ENCODE measurements at regions of chr19 and their contacts with region 1.

Region 1: GRCh38 chr19:3330047-3330446 is 36.3 kb upstream of the NFIC start:
- DNase-seq: no peak
- ATAC-seq: no peak
- H3K4me3 Mint-ChIP-seq: no peak overlapping the region
- H3K27ac Mint-ChIP-seq: no peak overlapping the region
- H3K4me1 Mint-ChIP-seq: no peaks in the 10 kb centered on the region
- H3K27me3 Mint-ChIP-seq: no peaks in the 10 kb centered on the region

Region 2: GRCh38 chr19:3275583-3276340 is 54.3 kb before region 1 on chr19:
- CTCF ChIA-PET with region 1: no interaction called
- POLR2A ChIA-PET with region 1: no interaction called
- DNase-seq: peak; percentile 94
- ATAC-seq: peak; percentile 88
- H3K4me3 Mint-ChIP-seq: peak overlapping the region; percentile 77
- H3K27ac Mint-ChIP-seq: peak overlapping the region; percentile 91
- H3K4me1 Mint-ChIP-seq: peaks cover 18% of the 10 kb centered on the region
- H3K27me3 Mint-ChIP-seq: peaks cover 14% of the 10 kb centered on the region

Region 3: GRCh38 chr19:3471954-3472655 is 142.1 kb after region 1 on chr19:
- CTCF ChIA-PET with region 1: interaction called, 17 read pairs
- POLR2A ChIA-PET with region 1: no interaction called
- DNase-seq: peak; percentile 42
- ATAC-seq: peak; percentile 41
- H3K4me3 Mint-ChIP-seq: no peak overlapping the region
- H3K27ac Mint-ChIP-seq: no peak overlapping the region
- H3K4me1 Mint-ChIP-seq: no peaks in the 10 kb centered on the region
- H3K27me3 Mint-ChIP-seq: no peaks in the 10 kb centered on the region

Measured in activated CD8-positive, alpha-beta T cell treated with anti-CD3 and anti-CD28 coated beads, Interleukin-2, amount 10 ng/mL, durations not matched to agents 7 days and 5 days (primary cell).